B cell (primary cell): ENCODE measurements at regions of chr1 and their contacts with region 1.

Region 1: GRCh38 chr1:171501305-171502024 is 16.1 kb downstream of the PRRC2C start:
- DNase-seq: no peak
- ATAC-seq: no peak
- H3K4me3 ChIP-seq: no peak overlapping the region
- H3K4me3 Mint-ChIP-seq: no peak overlapping the region
- H3K27ac ChIP-seq: peak overlapping the region in 1 of 2 donors; percentile 24
- H3K27ac Mint-ChIP-seq: no peak overlapping the region
- H3K4me1 ChIP-seq: peaks cover 23 to 32% of the 10 kb centered on the region in 2 donors
- H3K4me1 Mint-ChIP-seq: peaks cover 81% of the 10 kb centered on the region
- H3K27me3 ChIP-seq: no peaks in the 10 kb centered on the region
- H3K27me3 Mint-ChIP-seq: no peaks in the 10 kb centered on the region
- CTCF ChIP-seq: no peak

Region 2: GRCh38 chr1:171472183-171472647 is 29.2 kb before region 1 on chr1:
- CTCF ChIA-PET with region 1: no interaction called
- POLR2A ChIA-PET with region 1: no interaction called
- intact Hi-C with region 1: loop called (anchors 1 kb)
- DNase-seq: no peak
- ATAC-seq: no peak
- H3K4me3 ChIP-seq: no peak overlapping the region
- H3K4me3 Mint-ChIP-seq: no peak overlapping the region
- H3K27ac ChIP-seq: no peak overlapping the region
- H3K27ac Mint-ChIP-seq: no peak overlapping the region
- H3K4me1 ChIP-seq: no peaks in the 10 kb centered on the region
- H3K4me1 Mint-ChIP-seq: no peaks in the 10 kb centered on the region
- H3K27me3 ChIP-seq: no peaks in the 10 kb centered on the region
- H3K27me3 Mint-ChIP-seq: peaks cover 17% of the 10 kb centered on the region
- CTCF ChIP-seq: no peak